Activated T-helper 2 cell treated with anti-CD3 and anti-CD28 coated beads, Interferon-gamma antibody, Interleukin-2, Interleukin-4, amounts not matched to agents 10 μg/mL and 5 μg/mL and 100 μg/mL, durations not matched to agents 14 hours and 24 hours and 36 hours (primary cell): ENCODE measurements at regions of chr3 and their contacts with region 1.

Region 1: GRCh38 chr3:10224784-10225665 is 23.2 kb upstream of the TATDN2 start:
- DNase-seq: peak; percentile 37
- H3K4me3 Mint-ChIP-seq: peak overlapping the region; percentile 47
- H3K27ac Mint-ChIP-seq: peak overlapping the region; percentile 86
- H3K4me1 Mint-ChIP-seq: peaks cover 61% of the 10 kb centered on the region
- H3K27me3 Mint-ChIP-seq: no peaks in the 10 kb centered on the region

Region 2: DNA sequence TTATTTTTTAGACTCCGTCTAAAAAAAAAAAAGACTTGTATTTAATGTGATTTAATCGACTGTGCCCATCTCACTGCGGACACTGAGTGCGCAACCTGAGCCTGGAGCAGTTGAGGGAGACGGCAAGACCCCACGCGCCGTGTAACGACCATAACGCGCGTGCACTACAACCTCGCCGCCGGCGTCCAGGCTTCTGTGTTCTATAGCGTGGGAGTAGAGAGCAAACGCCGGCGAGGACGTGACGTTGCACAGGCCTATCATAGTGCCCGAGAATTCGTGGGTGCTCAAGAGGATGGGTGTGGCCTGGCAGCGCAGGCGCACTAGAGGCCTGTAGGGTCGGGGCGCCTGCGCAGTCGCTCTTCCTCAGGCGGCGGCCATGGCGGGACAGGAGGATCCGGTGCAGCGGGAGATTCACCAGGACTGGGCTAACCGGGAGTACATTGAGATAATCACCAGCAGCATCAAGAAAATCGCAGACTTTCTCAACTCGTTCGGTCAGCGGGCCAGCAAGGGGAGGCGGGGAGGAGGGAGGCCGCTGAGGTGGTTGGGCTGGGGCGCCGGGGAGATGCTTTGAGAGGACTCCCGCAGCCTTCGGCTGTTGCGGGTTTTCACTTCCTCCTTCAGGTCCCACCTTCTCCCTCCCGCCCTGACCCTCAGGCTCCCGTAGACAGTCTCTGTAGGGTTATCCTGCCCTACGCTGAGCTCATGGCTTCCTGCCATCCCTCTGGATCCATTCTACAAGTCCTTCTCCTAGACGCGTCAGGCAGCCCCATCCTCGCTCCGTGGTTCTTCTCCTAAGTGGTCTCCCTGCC is 109.5 kb before region 1 on chr3 and contains the start of gene BRK1:
- intact Hi-C with region 1: loop called (anchors 2 kb)
- DNase-seq: peak; percentile 90
- H3K4me3 Mint-ChIP-seq: peak within 1 kb of the TSS; percentile 97
- H3K27ac Mint-ChIP-seq: peak within 1 kb of the TSS; percentile 96
- H3K4me1 Mint-ChIP-seq: peaks cover 19% of the 10 kb centered on the region
- H3K27me3 Mint-ChIP-seq: no peaks in the 10 kb centered on the region
- total RNA-seq, gene BRK1: 94.4 and 100 TPM in 2 replicates

Region 3: DNA sequence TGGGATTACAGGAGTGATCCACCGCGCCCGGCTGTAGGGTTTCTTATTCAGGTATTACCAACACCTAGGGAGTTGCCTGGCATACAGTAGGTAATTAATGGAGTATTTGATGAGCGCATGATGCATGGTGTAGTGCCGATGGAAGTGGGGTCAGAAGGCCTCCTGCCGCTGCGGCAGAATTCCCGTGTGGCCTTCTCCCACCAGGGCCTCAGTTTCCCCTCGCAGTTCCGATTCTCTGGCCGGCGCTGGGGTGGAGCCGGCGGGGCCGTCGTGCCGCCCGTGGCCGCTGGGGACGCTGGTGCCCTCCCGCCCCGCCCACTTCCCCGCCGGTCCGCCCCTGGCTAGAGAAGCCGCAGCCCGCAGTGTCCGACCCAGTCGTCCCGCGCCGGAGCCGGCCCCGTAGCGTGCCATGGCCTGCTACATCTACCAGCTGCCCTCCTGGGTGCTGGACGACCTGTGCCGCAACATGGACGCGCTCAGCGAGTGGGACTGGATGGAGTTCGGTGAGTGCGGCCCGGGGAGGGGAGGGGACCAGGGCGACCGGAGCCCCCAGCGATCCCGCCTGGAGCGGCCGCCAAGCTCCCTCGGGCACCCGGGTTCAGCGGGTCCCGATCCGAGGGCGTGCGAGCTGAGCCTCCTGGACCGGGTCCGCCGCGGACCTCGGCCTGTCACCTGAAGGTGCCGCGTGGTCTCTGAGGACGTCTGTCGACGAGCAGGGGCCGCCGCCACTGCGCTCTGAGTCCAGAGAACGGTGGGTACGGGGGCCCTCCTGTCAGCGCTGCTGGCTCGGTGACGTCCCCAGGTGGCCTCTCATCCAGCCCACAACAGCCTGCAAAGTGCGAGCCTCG is 60.3 kb before region 1 on chr3 and contains the start of gene IRAK2:
- intact Hi-C with region 1: loop called (anchors 1 kb)
- DNase-seq: peak; percentile 39
- H3K4me3 Mint-ChIP-seq: peak within 1 kb of the TSS; percentile 72
- H3K27ac Mint-ChIP-seq: no peak within 1 kb of the TSS
- H3K4me1 Mint-ChIP-seq: peaks cover 21% of the 10 kb centered on the region
- H3K27me3 Mint-ChIP-seq: no peaks in the 10 kb centered on the region
- total RNA-seq, gene IRAK2: 2.4 and 2.6 TPM in 2 replicates

Region 4: GRCh38 chr3:10198761-10199649 is 26.0 kb before region 1 on chr3:
- intact Hi-C with region 1: loop called (anchors 1 kb)
- DNase-seq: peak; percentile 72
- H3K4me3 Mint-ChIP-seq: peak overlapping the region; percentile 15
- H3K27ac Mint-ChIP-seq: peak overlapping the region; percentile 91
- H3K4me1 Mint-ChIP-seq: peaks cover 65% of the 10 kb centered on the region
- H3K27me3 Mint-ChIP-seq: no peaks in the 10 kb centered on the region

Region 5: DNA sequence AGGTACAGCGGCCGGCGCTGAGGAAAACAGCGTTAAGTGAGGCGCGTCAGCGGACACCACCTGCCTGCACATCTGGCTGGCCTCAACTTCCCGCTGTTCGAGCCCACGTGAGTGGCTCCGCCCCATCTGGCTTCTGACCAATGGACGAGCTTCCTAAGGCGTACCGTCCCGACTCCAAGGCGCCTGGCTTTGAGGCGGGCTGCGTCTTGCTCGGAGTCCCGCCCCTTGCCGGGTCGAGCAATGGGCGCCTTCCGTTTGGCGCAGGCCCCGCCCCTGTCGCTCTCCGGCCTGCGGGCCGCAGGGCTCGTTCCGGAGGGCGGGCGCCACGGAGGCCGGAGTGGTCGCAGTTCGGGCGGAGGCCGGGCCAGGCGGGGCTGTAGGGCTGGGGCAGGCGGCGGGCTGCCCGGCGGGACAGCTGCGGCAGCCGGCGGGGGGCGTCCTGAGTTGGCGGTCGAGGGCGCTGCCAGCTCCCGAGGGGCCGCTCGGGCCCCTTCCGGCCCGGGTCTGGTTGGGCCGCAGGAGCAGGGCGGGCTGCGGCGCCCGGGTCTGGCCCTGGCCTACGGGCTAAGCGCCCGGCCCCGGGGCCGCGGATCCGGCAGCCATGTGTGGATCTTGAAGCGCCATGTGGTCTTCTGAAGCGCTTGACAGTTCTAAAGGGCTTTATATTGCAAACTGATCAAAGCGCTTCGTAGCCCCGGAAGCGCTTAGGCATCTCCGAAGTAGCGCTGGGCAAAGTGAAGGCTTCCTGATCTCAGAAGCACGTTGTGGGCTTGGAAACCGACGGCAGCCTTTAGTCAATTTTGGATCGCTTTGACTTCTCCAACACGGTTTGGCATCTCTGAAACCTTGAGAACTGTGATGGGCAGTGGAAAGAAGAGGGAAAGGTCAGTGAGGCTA is 23.4 kb after region 1 on chr3 and contains the start of gene TATDN2:
- intact Hi-C with region 1: loop called (anchors 1 kb)
- DNase-seq: peak; percentile 94
- H3K4me3 Mint-ChIP-seq: peak within 1 kb of the TSS; percentile 95
- H3K27ac Mint-ChIP-seq: peak within 1 kb of the TSS; percentile 97
- H3K4me1 Mint-ChIP-seq: peaks cover 47% of the 10 kb centered on the region
- H3K27me3 Mint-ChIP-seq: no peaks in the 10 kb centered on the region
- total RNA-seq, gene TATDN2: 64.9 and 65.6 TPM in 2 replicates

Region 6: GRCh38 chr3:10546181-10546624 is 321.2 kb after region 1 on chr3:
- intact Hi-C with region 1: no loop called
- DNase-seq: no peak
- H3K4me3 Mint-ChIP-seq: no peak overlapping the region
- H3K27ac Mint-ChIP-seq: no peak overlapping the region
- H3K4me1 Mint-ChIP-seq: peaks cover 19% of the 10 kb centered on the region
- H3K27me3 Mint-ChIP-seq: peaks cover 4% of the 10 kb centered on the region